Aorta (tissue), 5 donors: ENCODE measurements at regions of chr9 and their contacts with region 1.

Region 1: GRCh38 chr9:26310294-26310693 is 582.3 kb downstream of the CAAP1 start:
- DNase-seq: no peak
- ATAC-seq: no peak
- H3K4me3 ChIP-seq: no peak overlapping the region
- H3K27ac ChIP-seq: no peak overlapping the region
- H3K4me1 ChIP-seq: no peaks in the 10 kb centered on the region
- H3K27me3 ChIP-seq: peaks cover 0 to 1% of the 10 kb centered on the region in 2 donors

Region 2: GRCh38 chr9:26261503-26262330 is 48.6 kb before region 1 on chr9:
- intact Hi-C with region 1: loop called in 1 of 2 experiments (anchors 10 kb)
- DNase-seq: no peak
- ATAC-seq: no peak
- H3K4me3 ChIP-seq: no peak overlapping the region
- H3K27ac ChIP-seq: no peak overlapping the region
- H3K4me1 ChIP-seq: no peaks in the 10 kb centered on the region
- H3K27me3 ChIP-seq: no peaks in the 10 kb centered on the region